ENCODE measurements at regions of chr10 and their contacts with region 1.

Region 1: GRCh38 chr10:88932539-88933256 is 19.9 kb downstream of the ACTA2 start:
- DNase-seq: peak; percentile 59
- ATAC-seq: peak; percentile 84
- H3K4me3 Mint-ChIP-seq: no peak overlapping the region
- H3K27ac Mint-ChIP-seq: peak overlapping the region; percentile 20
- H3K4me1 Mint-ChIP-seq: peaks cover 18% of the 10 kb centered on the region
- H3K27me3 Mint-ChIP-seq: no peaks in the 10 kb centered on the region

Region 2: GRCh38 chr10:88565072-88565471 is 367.6 kb before region 1 on chr10:
- CTCF ChIA-PET with region 1: interaction called, 4 read pairs
- POLR2A ChIA-PET with region 1: no interaction called
- intact Hi-C with region 1: loop called (anchors 1 to 10 kb)
- DNase-seq: no peak
- ATAC-seq: peak; percentile 47
- H3K4me3 Mint-ChIP-seq: no peak overlapping the region
- H3K27ac Mint-ChIP-seq: no peak overlapping the region
- H3K4me1 Mint-ChIP-seq: no peaks in the 10 kb centered on the region
- H3K27me3 Mint-ChIP-seq: no peaks in the 10 kb centered on the region

Region 3: DNA sequence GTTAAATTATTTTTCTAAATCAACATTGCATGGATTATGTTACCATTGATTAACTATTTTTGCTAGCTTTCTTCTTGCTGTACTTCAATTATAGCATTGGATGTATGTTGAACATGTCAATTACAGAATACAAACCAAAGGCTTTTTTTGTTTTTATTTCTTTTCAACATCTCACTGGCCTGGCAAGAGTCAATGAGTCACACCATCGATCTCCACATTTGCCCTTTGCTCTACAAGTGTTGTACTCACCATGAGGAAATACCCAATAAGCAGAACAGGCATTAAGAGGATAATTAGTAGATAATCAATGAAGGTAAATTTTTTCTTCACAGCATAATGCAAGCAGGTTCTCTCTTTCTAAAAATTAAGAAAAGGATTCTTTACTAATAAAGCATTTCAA is 104.4 kb before region 1 on chr10:
- CTCF ChIA-PET with region 1: interaction called, 28 read pairs
- POLR2A ChIA-PET with region 1: interaction called, 5 read pairs
- intact Hi-C with region 1: no loop called
- DNase-seq: no peak
- ATAC-seq: no peak
- H3K4me3 Mint-ChIP-seq: no peak overlapping the region
- H3K27ac Mint-ChIP-seq: no peak overlapping the region
- H3K4me1 Mint-ChIP-seq: peaks cover 64% of the 10 kb centered on the region
- H3K27me3 Mint-ChIP-seq: no peaks in the 10 kb centered on the region

Region 4: GRCh38 chr10:88886557-88886956 is 46.1 kb before region 1 on chr10:
- CTCF ChIA-PET with region 1: interaction called, 11 read pairs
- POLR2A ChIA-PET with region 1: no interaction called
- intact Hi-C with region 1: loop called in 1 of 2 experiments (anchors 2 kb)
- DNase-seq: peak; percentile 49
- ATAC-seq: peak; percentile 93
- H3K4me3 Mint-ChIP-seq: no peak overlapping the region
- H3K27ac Mint-ChIP-seq: no peak overlapping the region
- H3K4me1 Mint-ChIP-seq: peaks cover 86% of the 10 kb centered on the region
- H3K27me3 Mint-ChIP-seq: no peaks in the 10 kb centered on the region

Region 5: DNA sequence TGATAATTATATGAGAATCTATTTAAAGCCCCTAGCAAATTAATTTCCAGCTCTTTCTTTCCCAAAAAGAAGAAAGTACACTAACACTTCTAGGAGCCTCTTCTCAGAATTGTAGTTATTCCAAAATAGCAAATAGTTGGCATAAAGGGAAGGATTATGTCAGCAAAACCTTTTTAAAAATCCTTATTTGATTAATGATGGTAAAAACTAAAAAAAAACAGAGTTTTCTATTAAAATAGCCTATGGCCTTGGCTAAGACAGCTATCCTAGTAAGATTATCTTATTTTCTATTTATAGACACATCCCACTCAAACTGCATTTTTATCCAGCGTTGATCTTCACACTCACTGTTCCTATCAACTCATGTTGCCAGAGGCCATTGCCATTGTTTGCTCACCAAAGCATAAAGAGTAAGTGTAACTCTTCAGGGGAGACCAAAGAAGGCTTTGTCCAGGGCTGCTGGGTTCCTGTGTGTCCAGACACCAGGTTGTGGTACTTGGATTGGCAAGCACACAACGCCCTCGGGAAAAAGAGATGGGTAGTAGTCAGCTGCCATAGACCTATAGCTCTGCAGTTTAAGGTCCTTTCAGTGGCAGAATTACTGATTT is 11.6 kb before region 1 on chr10:
- CTCF ChIA-PET with region 1: interaction called, 22 read pairs
- POLR2A ChIA-PET with region 1: interaction called, 3 read pairs
- intact Hi-C with region 1: no loop called
- DNase-seq: no peak
- ATAC-seq: no peak
- H3K4me3 Mint-ChIP-seq: no peak overlapping the region
- H3K27ac Mint-ChIP-seq: no peak overlapping the region
- H3K4me1 Mint-ChIP-seq: peaks cover 5% of the 10 kb centered on the region
- H3K27me3 Mint-ChIP-seq: no peaks in the 10 kb centered on the region

Region 6: DNA sequence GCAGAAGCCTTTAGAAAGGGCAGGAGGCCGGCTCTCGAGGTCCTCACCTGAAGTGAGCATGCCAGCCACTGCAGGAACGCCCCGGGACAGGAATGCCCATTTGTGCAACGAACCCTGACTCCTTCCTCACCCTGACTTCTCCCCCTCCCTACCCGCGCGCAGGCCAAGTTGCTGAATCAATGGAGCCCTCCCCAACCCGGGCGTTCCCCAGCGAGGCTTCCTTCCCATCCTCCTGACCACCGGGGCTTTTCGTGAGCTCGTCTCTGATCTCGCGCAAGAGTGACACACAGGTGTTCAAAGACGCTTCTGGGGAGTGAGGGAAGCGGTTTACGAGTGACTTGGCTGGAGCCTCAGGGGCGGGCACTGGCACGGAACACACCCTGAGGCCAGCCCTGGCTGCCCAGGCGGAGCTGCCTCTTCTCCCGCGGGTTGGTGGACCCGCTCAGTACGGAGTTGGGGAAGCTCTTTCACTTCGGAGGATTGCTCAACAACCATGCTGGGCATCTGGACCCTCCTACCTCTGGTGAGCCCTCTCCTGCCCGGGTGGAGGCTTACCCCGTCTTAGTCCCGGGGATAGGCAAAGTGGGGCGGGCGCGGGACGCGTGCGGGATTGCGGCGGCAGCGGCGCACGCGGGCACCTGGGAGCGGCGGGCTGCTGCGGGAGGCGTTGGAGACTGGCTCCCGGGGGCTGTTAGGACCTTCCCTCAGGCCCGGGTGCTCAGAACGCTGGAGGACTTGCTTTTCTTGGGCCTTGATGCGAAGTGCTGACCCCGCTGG is 57.9 kb after region 1 on chr10 and contains the start of gene FAS:
- CTCF ChIA-PET with region 1: interaction called, 53 read pairs
- POLR2A ChIA-PET with region 1: no interaction called
- intact Hi-C with region 1: loop called (anchors 1 kb)
- DNase-seq: peak; percentile 91
- ATAC-seq: peak; percentile 82
- H3K4me3 Mint-ChIP-seq: peak within 1 kb of the TSS; percentile 87
- H3K27ac Mint-ChIP-seq: peak within 1 kb of the TSS; percentile 94
- H3K4me1 Mint-ChIP-seq: peaks cover 61% of the 10 kb centered on the region
- H3K27me3 Mint-ChIP-seq: no peaks in the 10 kb centered on the region
- total RNA-seq, gene FAS: 34.1 to 34.9 TPM

Region 7: DNA sequence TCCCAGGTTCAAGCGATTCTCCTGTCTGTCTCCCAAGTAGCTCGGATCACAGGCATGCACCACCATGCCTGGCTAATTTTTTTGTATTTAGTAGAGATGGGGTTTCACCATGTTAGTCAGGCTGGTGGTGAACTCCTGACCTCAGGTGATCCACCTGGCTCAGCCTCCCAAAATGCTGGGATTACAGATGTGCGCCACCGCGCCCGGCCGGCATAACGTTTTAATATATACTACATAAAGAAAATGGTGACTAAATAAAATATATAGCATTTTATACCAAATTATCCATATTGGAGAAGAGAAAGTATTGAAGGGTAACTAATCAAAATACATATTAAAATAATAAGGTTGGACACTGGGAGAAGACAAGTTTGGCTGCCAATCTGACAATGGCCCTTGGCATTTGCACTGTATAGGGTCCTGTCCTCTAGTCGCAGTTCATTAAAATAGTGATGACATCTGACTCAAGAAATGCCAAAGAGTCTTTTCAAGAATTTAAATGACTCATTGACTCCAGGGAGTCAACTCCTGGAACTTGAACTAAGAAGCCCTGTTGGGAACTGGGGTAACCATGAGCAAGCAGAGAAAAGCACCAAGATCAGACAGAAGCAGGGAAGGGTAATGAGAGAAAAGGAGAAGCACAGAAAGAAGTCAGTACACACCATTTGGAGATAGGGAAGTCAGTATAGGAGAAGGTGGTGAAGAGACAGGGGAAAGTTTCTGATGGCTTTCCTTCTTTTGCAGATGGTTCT is 183.4 kb after region 1 on chr10:
- CTCF ChIA-PET with region 1: interaction called, 3 read pairs
- POLR2A ChIA-PET with region 1: no interaction called
- intact Hi-C with region 1: loop called in 1 of 2 experiments (anchors 2 kb)
- DNase-seq: no peak
- ATAC-seq: no peak
- H3K4me3 Mint-ChIP-seq: no peak overlapping the region
- H3K27ac Mint-ChIP-seq: no peak overlapping the region
- H3K4me1 Mint-ChIP-seq: no peaks in the 10 kb centered on the region
- H3K27me3 Mint-ChIP-seq: peaks cover 11% of the 10 kb centered on the region